ENCODE measurements at regions of chr13 and their contacts with region 1.

Region 1: GRCh38 chr13:26523007-26523406 is 34.5 kb upstream of the WASF3 start:
- DNase-seq: no peak
- H3K4me3 ChIP-seq: no peak overlapping the region
- H3K4me3 Mint-ChIP-seq: no peak overlapping the region
- H3K27ac ChIP-seq: no peak overlapping the region
- H3K27ac Mint-ChIP-seq: no peak overlapping the region
- H3K4me1 ChIP-seq: no peaks in the 10 kb centered on the region
- H3K4me1 Mint-ChIP-seq: no peaks in the 10 kb centered on the region
- H3K27me3 ChIP-seq: no peaks in the 10 kb centered on the region
- H3K27me3 Mint-ChIP-seq: peaks cover 9 to 10% of the 10 kb centered on the region in 2 donors

Region 2: DNA sequence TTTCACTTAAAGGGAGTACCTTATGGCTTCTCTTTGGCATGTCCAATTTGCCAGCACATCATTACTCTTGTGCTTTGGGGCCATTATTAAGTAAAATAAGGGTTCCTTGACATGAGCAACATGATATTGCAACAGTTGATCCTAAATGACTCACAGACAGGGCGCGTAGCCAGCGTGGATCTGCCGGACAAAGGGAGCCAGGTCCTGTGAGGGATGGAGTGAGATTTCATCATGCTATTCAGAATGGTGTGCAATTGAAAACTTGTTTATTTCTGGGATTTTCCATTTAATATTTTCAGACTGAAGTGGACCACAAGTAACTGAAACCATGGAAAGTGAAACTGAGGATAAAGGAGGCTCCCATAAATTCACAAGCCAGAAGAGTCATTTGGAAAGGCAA is 14.1 kb before region 1 on chr13:
- CTCF ChIA-PET with region 1: no interaction called
- POLR2A ChIA-PET with region 1: no interaction called
- intact Hi-C with region 1: loop called (anchors 1 kb)
- DNase-seq: no peak
- H3K4me3 ChIP-seq: no peak overlapping the region
- H3K4me3 Mint-ChIP-seq: no peak overlapping the region
- H3K27ac ChIP-seq: no peak overlapping the region
- H3K27ac Mint-ChIP-seq: no peak overlapping the region
- H3K4me1 ChIP-seq: no peaks in the 10 kb centered on the region
- H3K4me1 Mint-ChIP-seq: no peaks in the 10 kb centered on the region
- H3K27me3 ChIP-seq: no peaks in the 10 kb centered on the region
- H3K27me3 Mint-ChIP-seq: peaks cover 16 to 24% of the 10 kb centered on the region in 2 donors

Measured in CD4-positive, alpha-beta memory T cell (primary cell).